ENCODE measurements at regions of chr14 and their contacts with region 1.

Region 1: GRCh38 chr14:72420725-72421474 is 473.0 kb downstream of the DPF3 start:
- DNase-seq: peak; percentile 91
- H3K4me3 Mint-ChIP-seq: no peak overlapping the region
- H3K27ac Mint-ChIP-seq: no peak overlapping the region
- H3K4me1 Mint-ChIP-seq: peaks cover 2% of the 10 kb centered on the region
- H3K27me3 Mint-ChIP-seq: peaks cover 2% of the 10 kb centered on the region

Region 2: DNA sequence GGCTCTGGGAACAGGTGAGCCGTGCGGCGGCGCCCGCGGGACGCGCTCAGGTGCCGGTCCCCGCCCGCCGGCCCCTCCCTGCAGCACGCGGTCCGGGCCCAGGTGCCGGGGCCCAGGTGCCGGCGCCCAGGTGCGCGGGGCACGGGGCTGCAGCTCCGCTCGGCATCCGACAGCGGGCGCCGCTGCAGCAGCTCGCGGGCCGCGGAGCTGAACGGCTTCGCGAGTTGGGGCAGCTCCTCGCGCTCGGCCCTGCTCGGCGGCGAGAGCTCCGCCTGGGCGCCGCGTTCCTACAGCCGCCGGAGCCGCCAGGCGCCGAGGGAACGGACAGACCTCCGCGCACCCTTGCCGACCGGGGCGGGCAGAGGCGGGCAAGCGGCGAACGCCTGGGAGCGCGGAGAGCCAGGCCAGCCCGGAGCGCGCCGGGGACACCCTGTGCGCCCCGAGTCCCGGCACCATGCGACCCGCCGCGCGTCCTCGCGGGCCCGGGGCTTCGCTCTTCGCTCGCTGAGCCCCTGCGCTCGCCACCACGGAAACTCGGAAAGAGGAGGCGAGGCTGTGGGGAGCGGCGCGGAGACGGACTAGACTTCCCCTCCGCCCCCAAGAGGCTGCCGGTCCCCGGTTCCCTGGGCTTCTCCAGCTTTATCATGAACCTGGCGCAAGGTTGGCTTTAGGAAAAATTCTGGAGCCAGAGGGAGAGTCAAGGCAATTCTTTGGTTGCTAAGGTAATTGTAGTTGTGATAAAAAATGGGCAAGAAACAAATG is 488.5 kb before region 1 on chr14 and contains the start of gene RGS6:
- CTCF ChIA-PET with region 1: no interaction called
- intact Hi-C with region 1: loop called (anchors 5 kb)
- DNase-seq: peak; percentile 27
- H3K4me3 Mint-ChIP-seq: peak within 1 kb of the TSS; percentile 23
- H3K27ac Mint-ChIP-seq: no peak within 1 kb of the TSS
- H3K4me1 Mint-ChIP-seq: peaks cover 12% of the 10 kb centered on the region
- H3K27me3 Mint-ChIP-seq: peaks cover 43% of the 10 kb centered on the region
- total RNA-seq, gene RGS6: not detected

Region 3: DNA sequence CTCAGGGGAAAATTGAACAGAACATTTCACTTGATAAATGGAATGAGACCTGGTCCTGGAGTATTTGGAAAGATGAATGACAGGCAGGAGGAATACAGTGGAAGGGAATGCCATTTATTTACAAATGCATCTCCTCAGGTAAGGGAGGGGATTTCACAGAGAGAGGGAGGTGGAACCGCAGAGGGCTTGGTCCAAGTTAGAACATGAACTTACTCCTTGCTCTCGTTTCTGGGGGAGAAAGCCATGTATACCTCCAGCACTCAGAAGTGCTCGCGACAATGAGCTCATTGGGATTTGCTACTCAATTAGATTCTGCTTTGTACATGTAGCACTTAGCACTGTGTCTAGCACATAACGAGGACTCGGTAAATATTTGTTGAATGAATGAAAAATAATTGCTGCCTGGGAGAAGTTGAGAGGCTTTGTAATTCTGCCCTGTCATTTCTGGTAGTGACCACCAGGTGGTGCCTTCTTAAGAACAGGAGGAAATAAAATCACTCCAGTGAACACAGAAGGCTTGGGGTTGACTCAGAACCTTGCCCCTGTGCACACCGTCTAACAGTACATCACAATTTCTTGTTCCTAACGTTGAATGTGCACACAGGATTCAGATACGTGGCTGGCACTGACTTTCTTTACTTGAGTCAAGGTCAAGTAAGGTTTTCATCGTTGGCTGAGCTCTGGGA is 397.0 kb before region 1 on chr14:
- CTCF ChIA-PET with region 1: interaction called, 8 read pairs
- intact Hi-C with region 1: loop called (anchors 1 kb)
- DNase-seq: peak; percentile 69
- H3K4me3 Mint-ChIP-seq: no peak overlapping the region
- H3K27ac Mint-ChIP-seq: no peak overlapping the region
- H3K4me1 Mint-ChIP-seq: peaks cover 6% of the 10 kb centered on the region
- H3K27me3 Mint-ChIP-seq: peaks cover 12% of the 10 kb centered on the region

Region 4: DNA sequence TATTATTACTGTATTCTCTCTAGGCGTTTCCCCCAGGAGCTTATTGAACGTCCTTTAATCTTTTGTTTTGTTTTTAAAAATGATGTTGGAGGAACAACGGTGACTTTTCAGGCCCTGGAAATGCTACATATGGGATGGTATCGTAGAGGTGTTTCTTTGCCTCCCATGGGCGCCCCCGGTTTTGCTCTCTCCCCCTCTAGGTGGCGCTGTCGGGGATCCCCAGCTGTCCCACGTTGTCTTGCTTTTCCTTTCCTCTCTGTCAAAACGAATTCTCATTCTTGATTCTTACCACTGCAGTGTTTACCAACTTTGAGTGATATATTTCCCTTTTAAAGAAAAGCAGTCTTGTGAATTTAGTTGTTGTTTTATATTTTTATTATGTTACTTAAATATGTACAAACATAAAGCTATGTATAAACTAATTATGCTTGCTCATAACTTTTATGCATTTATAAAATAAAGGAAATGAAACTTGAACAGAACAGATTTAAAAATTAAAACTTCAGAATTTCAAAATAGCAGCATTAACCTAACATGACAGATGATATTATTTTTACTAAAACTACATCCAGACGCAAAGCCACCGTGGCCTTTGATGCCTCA is 316.8 kb before region 1 on chr14:
- CTCF ChIA-PET with region 1: interaction called, 4 read pairs
- intact Hi-C with region 1: loop called (anchors 1 kb)
- DNase-seq: peak; percentile 61
- H3K4me3 Mint-ChIP-seq: no peak overlapping the region
- H3K27ac Mint-ChIP-seq: no peak overlapping the region
- H3K4me1 Mint-ChIP-seq: no peaks in the 10 kb centered on the region
- H3K27me3 Mint-ChIP-seq: peaks cover 13% of the 10 kb centered on the region

Region 5: DNA sequence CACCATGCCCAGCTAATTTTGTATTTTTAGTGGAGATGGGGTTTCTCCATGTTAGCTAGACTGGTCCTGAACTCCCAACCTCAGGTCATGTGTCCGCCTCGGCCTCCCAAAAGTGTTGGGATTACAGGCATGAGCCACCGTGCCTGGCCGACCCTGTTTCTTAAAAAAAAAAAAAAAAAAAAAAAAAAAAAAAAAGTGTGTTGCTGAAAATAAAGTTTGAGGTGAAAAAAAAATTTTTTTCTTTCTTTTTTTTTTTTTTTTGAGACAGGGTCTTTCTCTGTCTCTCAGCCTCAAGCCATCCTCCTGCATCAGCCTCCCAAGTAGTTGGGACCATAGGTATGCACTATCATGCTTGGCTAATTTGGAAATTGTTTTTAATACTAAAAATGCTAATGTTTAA is 648.7 kb after region 1 on chr14:
- CTCF ChIA-PET with region 1: no interaction called
- intact Hi-C with region 1: no loop called
- DNase-seq: no peak
- H3K4me3 Mint-ChIP-seq: no peak overlapping the region
- H3K27ac Mint-ChIP-seq: no peak overlapping the region
- H3K4me1 Mint-ChIP-seq: peaks cover 31% of the 10 kb centered on the region
- H3K27me3 Mint-ChIP-seq: no peaks in the 10 kb centered on the region